ENCODE measurements at regions of chr14 and their contacts with region 1.

Region 1: GRCh38 chr14:100540141-100540925 is 46.9 kb downstream of the BEGAIN start:
- DNase-seq: peak; percentile 63
- ATAC-seq: peak; percentile 72
- H3K4me3 Mint-ChIP-seq: no peak overlapping the region
- H3K27ac Mint-ChIP-seq: no peak overlapping the region
- H3K4me1 Mint-ChIP-seq: peaks cover 5% of the 10 kb centered on the region
- H3K27me3 Mint-ChIP-seq: no peaks in the 10 kb centered on the region; the same call in 1 of the 2 replicates
- CTCF ChIP-seq: peak; percentile 26; the same call in 1 of the 2 replicates

Region 2: GRCh38 chr14:100155042-100155846 is 385.1 kb before region 1 on chr14:
- CTCF ChIA-PET with region 1: no interaction called
- POLR2A ChIA-PET with region 1: no interaction called
- DNase-seq: peak; percentile 89
- ATAC-seq: peak; percentile 69
- H3K4me3 Mint-ChIP-seq: no peak overlapping the region
- H3K27ac Mint-ChIP-seq: no peak overlapping the region
- H3K4me1 Mint-ChIP-seq: peaks cover 10% of the 10 kb centered on the region; the same call in 1 of the 2 replicates
- H3K27me3 Mint-ChIP-seq: peaks cover 51% of the 10 kb centered on the region
- CTCF ChIP-seq: peak; percentile 84

Region 3: DNA sequence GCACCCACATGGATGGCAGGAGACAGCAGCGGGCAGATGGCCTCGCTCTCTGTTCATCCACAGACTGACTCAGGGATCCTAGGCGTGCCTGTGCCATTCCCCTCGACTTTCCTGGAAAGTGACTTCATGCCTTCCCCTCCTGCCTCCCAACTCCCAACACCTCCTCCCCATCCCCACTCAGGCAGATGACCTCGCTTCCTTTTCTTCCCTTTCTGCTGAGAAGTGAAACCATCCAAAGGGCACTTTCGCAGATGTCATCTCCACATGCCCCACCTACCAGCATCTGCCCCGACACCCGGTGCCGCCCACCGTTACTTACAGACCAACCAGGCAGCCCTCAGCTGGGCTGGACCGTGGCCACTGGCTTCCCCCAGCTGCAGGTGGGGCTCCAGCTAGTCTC is 17.3 kb after region 1 on chr14:
- CTCF ChIA-PET with region 1: interaction called, 12 read pairs
- POLR2A ChIA-PET with region 1: no interaction called
- DNase-seq: no peak
- ATAC-seq: no peak
- H3K4me3 Mint-ChIP-seq: no peak overlapping the region
- H3K27ac Mint-ChIP-seq: no peak overlapping the region
- H3K4me1 Mint-ChIP-seq: peaks cover 14% of the 10 kb centered on the region
- H3K27me3 Mint-ChIP-seq: peaks cover 5% of the 10 kb centered on the region
- CTCF ChIP-seq: no peak

Region 4: DNA sequence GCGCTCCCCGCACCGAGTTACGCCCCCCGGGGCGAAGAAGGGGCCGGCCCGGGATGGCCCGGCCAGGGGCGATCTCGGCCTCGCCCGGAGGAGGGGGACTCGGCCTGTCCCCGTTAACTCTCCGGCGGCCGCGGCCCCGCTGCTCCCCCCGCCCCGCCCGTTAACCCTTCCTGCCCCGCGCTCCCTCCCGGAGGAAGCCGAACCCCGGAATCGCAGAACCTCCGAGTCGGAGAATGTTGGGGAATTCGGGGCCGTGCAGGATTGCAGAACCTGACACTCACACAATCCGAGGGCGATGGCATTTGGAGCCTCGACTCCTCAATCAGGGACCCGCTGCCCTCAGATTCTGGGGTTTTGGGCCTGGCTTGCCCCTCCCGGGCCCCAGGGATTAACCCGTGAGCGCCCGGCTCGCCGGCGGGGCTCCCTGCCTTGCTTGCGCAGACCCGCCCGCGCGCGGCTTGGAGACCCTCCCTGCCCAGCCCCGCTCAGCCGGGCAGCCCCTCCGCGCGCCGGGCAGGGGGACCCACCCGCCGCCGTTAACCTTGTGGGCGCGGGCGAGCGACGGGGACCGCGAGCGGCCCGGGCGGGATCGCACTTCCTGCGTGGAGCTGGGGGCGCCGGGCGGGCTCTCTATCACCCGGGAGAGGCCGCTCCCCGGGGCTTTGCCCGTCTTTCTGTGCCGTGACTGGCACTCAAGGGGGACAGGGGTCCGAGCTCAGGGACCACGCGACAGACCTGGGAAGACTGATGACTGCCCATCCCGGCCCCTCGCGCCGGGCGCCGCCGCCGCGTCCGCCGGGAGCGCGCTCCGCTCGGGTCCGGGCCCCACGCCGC is 28.0 kb after region 1 on chr14:
- CTCF ChIA-PET with region 1: interaction called, 10 read pairs
- POLR2A ChIA-PET with region 1: no interaction called
- DNase-seq: peak; percentile 35
- ATAC-seq: 0 out of 2 replicates have a peak, but pooled peaks have one; percentile 3
- H3K4me3 Mint-ChIP-seq: peak overlapping the region; percentile 41
- H3K27ac Mint-ChIP-seq: no peak overlapping the region
- H3K4me1 Mint-ChIP-seq: peaks cover 20% of the 10 kb centered on the region
- H3K27me3 Mint-ChIP-seq: peaks cover 55% of the 10 kb centered on the region
- CTCF ChIP-seq: no peak

Measured in WTC11 (cell line).